ENCODE measurements at regions of chr11 and their contacts with region 1.

Region 1: GRCh38 chr11:114257621-114258558 is 38.3 kb upstream of the NNMT start:
- DNase-seq: peak; percentile 76

Region 2: DNA sequence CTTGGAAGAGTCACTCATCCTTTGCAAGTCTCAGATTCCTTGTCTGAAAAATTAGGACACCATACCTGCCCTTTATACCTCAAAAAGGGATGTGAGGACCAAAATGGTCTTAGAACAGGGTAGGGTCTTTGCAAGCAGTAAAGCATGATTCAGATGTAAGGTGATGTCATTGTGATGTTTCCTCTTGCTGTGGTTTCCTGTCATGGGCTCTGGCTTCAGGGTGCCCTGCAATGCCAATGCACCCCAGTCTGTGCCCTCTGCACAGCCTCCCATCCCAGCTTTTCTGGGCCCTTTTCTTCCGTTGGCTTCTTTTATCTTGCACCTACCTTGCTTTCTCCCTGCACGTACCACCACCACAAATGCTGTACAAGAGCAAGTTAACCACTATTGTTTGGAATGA is 49.5 kb before region 1 on chr11:
- intact Hi-C with region 1: no loop called
- DNase-seq: no peak

Region 3: GRCh38 chr11:114219559-114220349 is 38.1 kb before region 1 on chr11:
- intact Hi-C with region 1: loop called (anchors 5 kb)
- DNase-seq: no peak

Measured in cardiac septum (tissue), 1 donor.